HCT116 (cell line): ENCODE measurements at regions of chr11 and their contacts with region 1.

Region 1: DNA sequence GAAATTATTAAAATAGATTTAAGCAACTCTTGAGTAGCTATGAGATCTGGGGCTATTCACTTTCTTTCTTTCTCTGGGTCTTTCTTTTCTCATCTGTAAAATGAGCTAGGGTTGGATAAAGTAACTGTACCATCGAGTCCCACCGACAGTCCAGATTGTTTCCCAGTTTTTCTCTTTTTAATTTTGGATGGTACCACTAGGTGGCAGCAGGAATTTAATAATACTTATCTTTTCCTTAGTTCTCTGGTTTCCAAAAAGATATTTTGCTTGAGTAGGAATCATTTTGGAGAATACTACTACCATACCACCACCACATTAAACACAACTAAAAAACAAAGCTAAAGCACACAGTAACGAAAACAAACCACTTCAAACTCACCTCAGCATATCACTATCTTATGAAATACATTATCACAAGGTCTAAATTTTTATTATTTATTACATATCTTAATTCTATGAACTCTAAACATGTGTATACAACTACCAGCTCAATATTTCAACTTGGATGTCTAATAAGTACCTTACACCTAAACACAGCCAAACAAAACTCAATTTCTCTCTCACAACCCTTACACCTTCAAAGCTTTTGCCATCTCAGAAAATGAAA is 584.0 kb downstream of the KCNA4 start:
- DNase-seq: peak; percentile 3
- ATAC-seq: peak; percentile 46; the same call in 1 of the 2 replicates
- H3K4me3 ChIP-seq: no peak overlapping the region
- H3K27ac ChIP-seq: no peak overlapping the region
- H3K4me1 ChIP-seq: no peaks in the 10 kb centered on the region
- H3K27me3 ChIP-seq: no peaks in the 10 kb centered on the region
- CTCF ChIP-seq: peak; percentile 21 to 62 (median 30); a peak in 3 of 6 replicates
- POLR2A ChIP-seq: no peak
- RAD21 ChIP-seq: peak; percentile 49; the same call in 1 of the 2 replicates

Region 2: DNA sequence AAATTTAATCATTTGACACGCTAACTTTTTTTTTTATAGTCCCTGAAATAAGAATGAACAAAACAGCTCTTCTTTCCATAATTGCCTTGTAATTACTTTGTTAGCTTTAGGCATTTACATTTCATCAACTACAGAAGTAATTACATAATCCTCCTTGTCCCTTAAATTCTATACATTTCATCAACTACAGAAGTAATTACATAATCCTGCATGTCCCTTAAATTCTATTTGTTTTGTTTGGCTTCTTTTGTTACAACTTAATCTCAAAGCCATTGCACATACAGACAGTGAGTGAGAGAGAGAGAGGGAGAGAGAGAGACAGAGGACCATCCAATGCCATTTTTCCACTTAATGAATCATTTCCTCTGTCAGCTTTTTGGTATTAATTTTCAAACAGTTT is 451.4 kb before region 1 on chr11:
- CTCF ChIA-PET with region 1: no interaction called
- POLR2A ChIA-PET with region 1: no interaction called
- RAD21 ChIA-PET with region 1: no interaction called
- intact Hi-C with region 1: no loop called
- DNase-seq: no peak
- ATAC-seq: no peak
- H3K4me3 ChIP-seq: no peak overlapping the region
- H3K27ac ChIP-seq: no peak overlapping the region
- H3K4me1 ChIP-seq: no peaks in the 10 kb centered on the region
- H3K27me3 ChIP-seq: no peaks in the 10 kb centered on the region
- CTCF ChIP-seq: no peak
- POLR2A ChIP-seq: no peak
- RAD21 ChIP-seq: no peak

Region 3: GRCh38 chr11:29272019-29272654 is 160.7 kb before region 1 on chr11:
- CTCF ChIA-PET with region 1: no interaction called
- POLR2A ChIA-PET with region 1: no interaction called
- RAD21 ChIA-PET with region 1: no interaction called
- intact Hi-C with region 1: no loop called
- DNase-seq: peak; percentile 38
- ATAC-seq: peak; percentile 95
- H3K4me3 ChIP-seq: no peak overlapping the region
- H3K27ac ChIP-seq: no peak overlapping the region
- H3K4me1 ChIP-seq: no peaks in the 10 kb centered on the region
- H3K27me3 ChIP-seq: no peaks in the 10 kb centered on the region
- CTCF ChIP-seq: peak; percentile 41 to 57 (median 46); a peak in 5 of 6 replicates
- POLR2A ChIP-seq: no peak
- RAD21 ChIP-seq: peak; percentile 62

Region 4: DNA sequence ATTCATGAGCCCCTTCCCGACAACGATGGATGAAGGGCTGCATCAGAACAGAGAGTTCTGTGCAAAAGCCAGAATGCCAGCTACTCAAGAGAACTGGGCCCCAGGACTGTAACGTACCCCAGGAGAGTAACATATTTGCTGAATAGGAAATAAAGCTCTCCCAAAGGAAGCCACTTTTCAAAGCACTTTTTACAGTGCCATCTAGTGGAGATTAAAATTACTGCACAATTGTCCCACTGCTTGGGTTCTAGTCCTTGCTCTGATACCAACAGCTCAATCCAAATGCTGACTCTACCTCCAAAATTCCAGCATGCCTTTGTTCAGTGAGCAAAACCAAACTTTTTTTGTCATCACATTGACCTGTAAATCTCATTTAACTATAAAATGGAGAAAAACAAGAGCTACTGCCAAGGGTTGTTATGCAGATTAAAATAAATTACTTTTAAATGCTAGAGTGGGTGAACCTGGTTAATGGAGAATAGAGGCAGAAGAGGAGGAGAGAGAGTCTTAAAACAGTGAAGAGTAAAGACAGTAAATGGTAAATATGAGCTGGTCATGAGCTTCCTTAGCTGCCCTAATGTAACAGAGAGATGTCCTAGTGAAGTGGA is 710.4 kb after region 1 on chr11:
- CTCF ChIA-PET with region 1: no interaction called
- POLR2A ChIA-PET with region 1: interaction called, 3 read pairs
- RAD21 ChIA-PET with region 1: no interaction called
- intact Hi-C with region 1: loop called (anchors 1 kb)
- DNase-seq: peak; percentile 16
- ATAC-seq: peak; percentile 67
- H3K4me3 ChIP-seq: no peak overlapping the region
- H3K27ac ChIP-seq: no peak overlapping the region
- H3K4me1 ChIP-seq: no peaks in the 10 kb centered on the region
- H3K27me3 ChIP-seq: no peaks in the 10 kb centered on the region
- CTCF ChIP-seq: peak; percentile 27 to 76 (median 56); a peak in 5 of 6 replicates
- POLR2A ChIP-seq: no peak
- RAD21 ChIP-seq: peak; percentile 44

Region 5: DNA sequence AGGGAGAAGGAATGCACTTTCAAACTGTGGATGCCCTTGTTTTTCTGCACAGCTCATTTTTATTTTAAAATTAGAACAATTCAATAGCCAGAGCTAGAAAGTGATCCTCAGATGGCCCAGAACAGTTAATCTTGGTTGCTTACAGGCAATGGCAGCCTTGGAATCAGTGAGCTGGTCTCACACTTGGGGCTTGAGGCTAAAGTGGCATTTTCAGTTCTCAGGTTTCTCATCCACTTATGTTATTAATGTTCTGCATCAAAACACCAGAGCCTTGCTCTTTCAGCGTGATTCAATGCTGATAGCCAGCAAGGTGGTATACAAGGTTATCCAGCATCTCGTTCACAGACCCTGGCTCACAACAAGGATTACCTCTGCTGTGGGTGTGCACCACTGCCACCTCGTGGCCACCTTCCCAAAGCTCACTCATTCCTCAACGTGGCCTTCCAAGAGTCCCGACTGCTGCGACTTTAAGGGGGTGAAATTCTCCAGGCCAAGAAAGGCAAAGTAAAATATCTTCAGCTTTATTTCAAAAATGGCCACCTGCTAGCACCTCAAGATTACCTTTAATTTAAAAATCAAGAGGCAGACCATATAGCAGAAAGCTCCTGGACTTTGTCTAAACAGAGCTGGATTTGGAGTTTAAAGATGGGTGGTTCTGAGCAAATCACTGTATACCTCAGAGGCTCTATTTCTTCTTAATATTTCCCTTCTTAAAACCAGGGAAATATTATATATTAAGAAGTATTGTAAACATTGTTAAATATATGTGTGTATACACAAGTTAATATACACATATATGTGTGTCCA is 763.8 kb after region 1 on chr11:
- CTCF ChIA-PET with region 1: no interaction called
- POLR2A ChIA-PET with region 1: no interaction called
- RAD21 ChIA-PET with region 1: no interaction called
- intact Hi-C with region 1: loop called (anchors 1 kb)
- DNase-seq: peak; percentile 32
- ATAC-seq: peak; percentile 89
- H3K4me3 ChIP-seq: no peak overlapping the region
- H3K27ac ChIP-seq: no peak overlapping the region
- H3K4me1 ChIP-seq: no peaks in the 10 kb centered on the region
- H3K27me3 ChIP-seq: peaks cover 3% of the 10 kb centered on the region; the same call in 1 of the 2 replicates
- CTCF ChIP-seq: peak; percentile 36 to 87 (median 84); a peak in 5 of 6 replicates
- POLR2A ChIP-seq: no peak
- RAD21 ChIP-seq: peak; percentile 47

Region 6: GRCh38 chr11:30314625-30315024 is 881.8 kb after region 1 on chr11:
- CTCF ChIA-PET with region 1: no interaction called
- POLR2A ChIA-PET with region 1: no interaction called
- RAD21 ChIA-PET with region 1: no interaction called
- intact Hi-C with region 1: loop called (anchors 5 kb)
- DNase-seq: no peak
- ATAC-seq: peak; percentile 47; the same call in 1 of the 2 replicates
- H3K4me3 ChIP-seq: no peak overlapping the region
- H3K27ac ChIP-seq: no peak overlapping the region
- H3K4me1 ChIP-seq: no peaks in the 10 kb centered on the region
- H3K27me3 ChIP-seq: peaks cover 25% of the 10 kb centered on the region
- CTCF ChIP-seq: peak; percentile 25 to 52 (median 50); a peak in 5 of 6 replicates
- POLR2A ChIP-seq: no peak
- RAD21 ChIP-seq: peak; percentile 21; the same call in 1 of the 2 replicates

Region 7: GRCh38 chr11:30917859-30918478 is 1485.1 kb after region 1 on chr11:
- CTCF ChIA-PET with region 1: no interaction called
- POLR2A ChIA-PET with region 1: no interaction called
- RAD21 ChIA-PET with region 1: no interaction called
- intact Hi-C with region 1: loop called (anchors 5 kb)
- DNase-seq: peak; percentile 27
- ATAC-seq: peak; percentile 70
- H3K4me3 ChIP-seq: no peak overlapping the region
- H3K27ac ChIP-seq: no peak overlapping the region
- H3K4me1 ChIP-seq: no peaks in the 10 kb centered on the region
- H3K27me3 ChIP-seq: peaks cover 51% of the 10 kb centered on the region
- CTCF ChIP-seq: peak; percentile 36 to 70 (median 38); a peak in 4 of 6 replicates
- POLR2A ChIP-seq: no peak
- RAD21 ChIP-seq: peak; percentile 58